ENCODE measurements at regions of chr20 and their contacts with region 1.

Region 1: GRCh38 chr20:36460648-36461599 is 80.4 kb upstream of the MYL9 start:
- DNase-seq: peak; percentile 81
- H3K4me3 Mint-ChIP-seq: peak overlapping the region; percentile 70
- H3K27ac Mint-ChIP-seq: peak overlapping the region; percentile 87
- H3K4me1 Mint-ChIP-seq: peaks cover 48% of the 10 kb centered on the region
- H3K27me3 Mint-ChIP-seq: peaks cover 5% of the 10 kb centered on the region

Region 2: GRCh38 chr20:35664544-35665221 is 796.2 kb before region 1 on chr20 and contains the starts of genes CPNE1 and RBM12:
- intact Hi-C with region 1: loop called (anchors 5 kb)
- DNase-seq: peak; percentile 91
- H3K4me3 Mint-ChIP-seq: peak within 1 kb of the TSS; percentile 95
- H3K27ac Mint-ChIP-seq: peak within 1 kb of the TSS; percentile 99
- H3K4me1 Mint-ChIP-seq: peaks cover 48% of the 10 kb centered on the region
- H3K27me3 Mint-ChIP-seq: no peaks in the 10 kb centered on the region
- total RNA-seq, gene CPNE1: 304 and 308 TPM in 2 replicates
- total RNA-seq, gene RBM12: 151 and 168 TPM in 2 replicates

Region 3: DNA sequence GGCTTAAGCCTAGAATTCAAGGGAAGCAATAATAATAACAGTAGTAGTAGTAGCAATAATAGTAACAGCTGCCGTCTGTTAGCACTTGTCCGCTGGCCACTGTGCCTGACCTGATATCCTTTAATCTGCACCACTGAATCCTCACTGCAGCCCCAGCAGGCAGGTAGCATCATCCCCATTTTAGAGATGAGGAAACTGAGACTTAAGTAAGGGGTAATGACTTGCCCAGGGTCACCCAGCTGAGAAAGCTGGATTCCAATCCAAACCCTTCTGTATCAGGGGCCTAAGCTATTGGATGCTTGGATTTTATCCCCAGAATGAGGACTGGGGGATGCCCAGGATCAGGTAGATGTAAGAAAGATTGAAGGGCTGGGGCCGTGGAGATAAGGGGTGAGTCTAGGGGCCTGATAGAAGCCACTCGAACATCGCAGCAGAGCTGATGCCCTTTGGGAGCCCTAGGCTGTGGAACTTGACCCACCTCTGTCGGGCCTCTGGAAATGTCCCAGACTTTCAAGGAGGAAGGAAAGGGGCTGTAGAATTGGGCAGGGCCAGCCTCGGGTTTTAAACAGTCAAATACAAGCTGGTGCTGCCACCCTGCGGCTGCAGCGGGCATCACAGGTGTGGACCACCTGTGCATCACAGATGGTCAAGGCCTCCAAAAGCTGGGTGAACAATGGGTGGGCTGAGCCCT is 21.7 kb before region 1 on chr20:
- intact Hi-C with region 1: loop called (anchors 1 kb)
- DNase-seq: peak; percentile 54
- H3K4me3 Mint-ChIP-seq: no peak overlapping the region
- H3K27ac Mint-ChIP-seq: no peak overlapping the region
- H3K4me1 Mint-ChIP-seq: peaks cover 4% of the 10 kb centered on the region
- H3K27me3 Mint-ChIP-seq: peaks cover 10% of the 10 kb centered on the region

Region 4: GRCh38 chr20:36499723-36500501 is 39.0 kb after region 1 on chr20:
- intact Hi-C with region 1: no loop called
- DNase-seq: no peak
- H3K4me3 Mint-ChIP-seq: no peak overlapping the region
- H3K27ac Mint-ChIP-seq: no peak overlapping the region
- H3K4me1 Mint-ChIP-seq: no peaks in the 10 kb centered on the region
- H3K27me3 Mint-ChIP-seq: no peaks in the 10 kb centered on the region

Region 5: GRCh38 chr20:36599912-36600345 is 139.0 kb after region 1 on chr20:
- intact Hi-C with region 1: loop called (anchors 1 kb)
- DNase-seq: no peak
- H3K4me3 Mint-ChIP-seq: no peak overlapping the region
- H3K27ac Mint-ChIP-seq: peak overlapping the region; percentile 69
- H3K4me1 Mint-ChIP-seq: peaks cover 29% of the 10 kb centered on the region
- H3K27me3 Mint-ChIP-seq: no peaks in the 10 kb centered on the region

Region 6: DNA sequence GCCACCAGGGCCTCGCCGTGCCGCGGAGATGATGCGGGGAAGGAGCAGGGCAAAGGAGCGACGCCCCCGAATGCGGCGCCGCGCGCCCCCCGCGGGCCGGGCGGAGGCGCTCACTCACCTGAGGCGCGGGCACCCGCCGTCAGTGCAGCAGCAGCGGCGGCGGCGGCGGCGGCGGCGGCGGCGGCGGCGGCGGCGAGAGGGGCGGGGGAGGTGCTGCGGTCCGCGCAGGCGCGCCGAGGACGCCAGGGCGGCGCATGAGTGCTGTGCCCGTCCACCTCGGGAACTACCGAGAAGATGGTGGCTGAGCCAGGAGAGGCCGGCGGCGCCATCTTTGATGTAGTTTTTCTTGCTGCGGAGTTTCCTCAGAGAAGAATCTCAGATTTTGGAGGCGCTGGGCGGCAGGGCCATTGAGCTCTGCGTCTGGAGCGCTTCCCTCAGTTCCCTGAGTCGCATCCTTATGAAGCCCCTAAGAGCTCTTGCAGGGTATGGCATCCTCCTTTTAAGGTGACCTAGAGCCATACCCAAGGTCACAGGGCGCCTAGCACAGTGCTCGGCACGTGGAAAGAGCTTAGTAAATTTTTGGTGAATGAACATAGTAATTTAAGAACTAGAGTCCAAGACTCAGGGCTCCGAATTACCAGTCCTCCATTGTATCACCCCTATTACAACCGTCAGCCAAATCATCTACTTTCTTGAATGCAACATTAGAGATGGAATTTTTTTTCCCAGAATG is 285.2 kb after region 1 on chr20 and contains the start of gene NDRG3:
- intact Hi-C with region 1: loop called (anchors 5 kb)
- DNase-seq: peak; percentile 90
- H3K4me3 Mint-ChIP-seq: peak within 1 kb of the TSS; percentile 91
- H3K27ac Mint-ChIP-seq: peak within 1 kb of the TSS; percentile 83
- H3K4me1 Mint-ChIP-seq: peaks cover 27% of the 10 kb centered on the region
- H3K27me3 Mint-ChIP-seq: peaks cover 6% of the 10 kb centered on the region
- total RNA-seq, gene NDRG3: 21.3 and 21.9 TPM in 2 replicates

Region 7: GRCh38 chr20:37095599-37096414 is 634.9 kb after region 1 on chr20 and contains the start of gene RBL1:
- intact Hi-C with region 1: loop called (anchors 10 kb)
- DNase-seq: peak; percentile 83
- H3K4me3 Mint-ChIP-seq: peak within 1 kb of the TSS; percentile 99
- H3K27ac Mint-ChIP-seq: peak within 1 kb of the TSS; percentile 100
- H3K4me1 Mint-ChIP-seq: peaks cover 37% of the 10 kb centered on the region
- H3K27me3 Mint-ChIP-seq: peaks cover 3% of the 10 kb centered on the region
- total RNA-seq, gene RBL1: 49.2 and 53.7 TPM in 2 replicates

Measured in activated T-helper 1 cell treated with anti-CD3 and anti-CD28 coated beads, Interleukin-12 subunit alpha, Interleukin-12 subunit beta, Interleukin-2, Interleukin-4 antibody, amounts not matched to agents 30 ng/mL and 10 ng/mL and 1 ng/mL, durations not matched to agents 14 hours and 24 hours and 36 hours (primary cell).